Astrocyte of the cerebellum (primary cell): ENCODE measurements at regions of chr5 and their contacts with region 1.

Region 1: GRCh38 chr5:15003511-15003920 is 131.9 kb upstream of the ANKH start:
- DNase-seq: peak; percentile 57
- H3K4me3 ChIP-seq: no peak overlapping the region
- CTCF ChIP-seq: peak; percentile 76

Region 2: DNA sequence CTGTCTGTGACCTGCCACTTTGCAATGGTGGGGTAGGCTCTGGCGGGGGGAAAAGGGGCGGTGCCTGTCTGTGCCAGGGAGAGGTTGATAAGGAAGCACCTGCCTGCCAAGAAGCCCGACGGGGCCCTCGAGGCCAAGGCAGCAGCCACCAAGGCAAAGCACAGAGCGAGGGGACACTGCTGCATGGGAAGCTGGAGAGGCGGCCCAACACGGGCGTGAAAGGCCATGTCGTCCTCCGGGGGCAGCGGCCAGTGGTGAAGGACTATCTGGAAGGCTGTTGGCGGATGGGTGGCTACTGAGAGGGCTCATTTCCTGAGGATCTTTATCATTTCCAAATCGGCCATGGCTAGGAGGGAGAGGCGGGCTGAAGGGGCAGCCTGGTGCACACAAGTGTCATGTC is 272.6 kb before region 1 on chr5:
- in situ Hi-C with region 1: loop called (anchors 5 kb)
- DNase-seq: no peak
- H3K4me3 ChIP-seq: no peak overlapping the region
- CTCF ChIP-seq: no peak

Region 3: GRCh38 chr5:14871210-14872069 is 132.1 kb before region 1 on chr5 and contains the start of gene ANKH:
- in situ Hi-C with region 1: loop called (anchors 5 kb)
- DNase-seq: peak; percentile 40
- H3K4me3 ChIP-seq: peak within 1 kb of the TSS; percentile 71
- CTCF ChIP-seq: no peak

Region 4: GRCh38 chr5:14914603-14915277 is 88.8 kb before region 1 on chr5:
- in situ Hi-C with region 1: loop called (anchors 5 kb)
- DNase-seq: no peak
- H3K4me3 ChIP-seq: no peak overlapping the region
- CTCF ChIP-seq: no peak